ENCODE measurements at regions of chr11 and their contacts with region 1.

Region 1: GRCh38 chr11:71977743-71978418 is 20.8 kb upstream of the IL18BP start:
- DNase-seq: peak; percentile 30
- ATAC-seq: peak; percentile 92
- H3K4me3 ChIP-seq: no peak overlapping the region
- H3K27ac ChIP-seq: peak overlapping the region; percentile 13
- H3K4me1 ChIP-seq: peaks cover 10% of the 10 kb centered on the region
- H3K27me3 ChIP-seq: no peaks in the 10 kb centered on the region
- CTCF ChIP-seq: peak; percentile 45 to 77 (median 59); a peak in 5 of 6 replicates
- EP300 ChIP-seq: no peak
- POLR2A ChIP-seq: no peak
- RAD21 ChIP-seq: peak; percentile 85

Region 2: DNA sequence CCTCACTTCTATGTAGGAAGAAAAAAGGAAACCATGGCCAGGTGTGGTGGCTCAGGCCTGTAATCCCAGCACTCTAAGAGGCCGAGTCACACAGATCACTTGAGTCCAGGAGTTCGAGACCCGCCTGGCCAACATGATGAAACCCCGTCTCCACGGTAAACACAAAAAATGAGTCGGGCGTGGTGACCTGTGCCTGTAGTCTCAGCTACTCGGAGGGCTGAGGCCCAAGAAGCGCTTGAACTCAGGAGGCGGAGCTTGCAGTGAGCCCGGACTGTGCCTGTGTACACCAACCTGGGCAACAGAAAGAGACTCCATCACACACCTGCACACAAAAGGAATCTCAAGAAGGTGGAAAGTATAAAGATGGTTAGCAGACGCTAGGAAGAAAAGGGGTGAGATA is 81.9 kb before region 1 on chr11:
- CTCF ChIA-PET with region 1: no interaction called
- POLR2A ChIA-PET with region 1: no interaction called
- RAD21 ChIA-PET with region 1: no interaction called
- SMC1A ChIA-PET with region 1: no interaction called
- in situ Hi-C with region 1: no loop called
- intact Hi-C with region 1: no loop called
- DNase-seq: no peak
- ATAC-seq: no peak
- H3K4me3 ChIP-seq: no peak overlapping the region
- H3K27ac ChIP-seq: no peak overlapping the region
- H3K4me1 ChIP-seq: no peaks in the 10 kb centered on the region
- H3K27me3 ChIP-seq: no peaks in the 10 kb centered on the region
- CTCF ChIP-seq: no peak
- EP300 ChIP-seq: no peak
- POLR2A ChIP-seq: no peak
- RAD21 ChIP-seq: no peak

Region 3: GRCh38 chr11:71934213-71934612 is 43.7 kb before region 1 on chr11:
- CTCF ChIA-PET with region 1: interaction called, 49 read pairs
- POLR2A ChIA-PET with region 1: interaction called, 4 read pairs
- RAD21 ChIA-PET with region 1: interaction called, 24 read pairs
- SMC1A ChIA-PET with region 1: interaction called, 63 read pairs
- in situ Hi-C with region 1: no loop called
- intact Hi-C with region 1: no loop called
- DNase-seq: no peak
- ATAC-seq: peak; percentile 69
- H3K4me3 ChIP-seq: peak overlapping the region; percentile 86
- H3K27ac ChIP-seq: peak overlapping the region; percentile 98
- H3K4me1 ChIP-seq: peaks cover 21% of the 10 kb centered on the region
- H3K27me3 ChIP-seq: no peaks in the 10 kb centered on the region
- CTCF ChIP-seq: no peak
- EP300 ChIP-seq: no peak
- POLR2A ChIP-seq: no peak
- RAD21 ChIP-seq: no peak

Region 4: GRCh38 chr11:71962428-71963038 is 15.3 kb before region 1 on chr11:
- CTCF ChIA-PET with region 1: interaction called, 70 read pairs
- POLR2A ChIA-PET with region 1: no interaction called
- RAD21 ChIA-PET with region 1: interaction called, 5 read pairs
- SMC1A ChIA-PET with region 1: interaction called, 11 read pairs
- in situ Hi-C with region 1: no loop called
- intact Hi-C with region 1: no loop called
- DNase-seq: peak; percentile 53
- ATAC-seq: peak; percentile 96
- H3K4me3 ChIP-seq: peak overlapping the region; percentile 46; the same call in 1 of the 2 replicates
- H3K27ac ChIP-seq: peak overlapping the region; percentile 65
- H3K4me1 ChIP-seq: peaks cover 11% of the 10 kb centered on the region
- H3K27me3 ChIP-seq: no peaks in the 10 kb centered on the region
- CTCF ChIP-seq: no peak
- EP300 ChIP-seq: peak in 1 of 2 experiments; percentile 83; a peak in 1 of 4 replicates
- POLR2A ChIP-seq: no peak
- RAD21 ChIP-seq: no peak

Region 5: GRCh38 chr11:72009186-72009585 is 31.3 kb after region 1 on chr11:
- CTCF ChIA-PET with region 1: interaction called, 138 read pairs
- POLR2A ChIA-PET with region 1: interaction called, 4 read pairs
- RAD21 ChIA-PET with region 1: interaction called, 51 read pairs
- SMC1A ChIA-PET with region 1: interaction called, 64 read pairs
- in situ Hi-C with region 1: no loop called
- intact Hi-C with region 1: no loop called
- DNase-seq: no peak
- ATAC-seq: no peak
- H3K4me3 ChIP-seq: no peak overlapping the region
- H3K27ac ChIP-seq: no peak overlapping the region
- H3K4me1 ChIP-seq: no peaks in the 10 kb centered on the region
- H3K27me3 ChIP-seq: no peaks in the 10 kb centered on the region
- CTCF ChIP-seq: no peak
- EP300 ChIP-seq: no peak
- POLR2A ChIP-seq: no peak
- RAD21 ChIP-seq: no peak

Region 6: DNA sequence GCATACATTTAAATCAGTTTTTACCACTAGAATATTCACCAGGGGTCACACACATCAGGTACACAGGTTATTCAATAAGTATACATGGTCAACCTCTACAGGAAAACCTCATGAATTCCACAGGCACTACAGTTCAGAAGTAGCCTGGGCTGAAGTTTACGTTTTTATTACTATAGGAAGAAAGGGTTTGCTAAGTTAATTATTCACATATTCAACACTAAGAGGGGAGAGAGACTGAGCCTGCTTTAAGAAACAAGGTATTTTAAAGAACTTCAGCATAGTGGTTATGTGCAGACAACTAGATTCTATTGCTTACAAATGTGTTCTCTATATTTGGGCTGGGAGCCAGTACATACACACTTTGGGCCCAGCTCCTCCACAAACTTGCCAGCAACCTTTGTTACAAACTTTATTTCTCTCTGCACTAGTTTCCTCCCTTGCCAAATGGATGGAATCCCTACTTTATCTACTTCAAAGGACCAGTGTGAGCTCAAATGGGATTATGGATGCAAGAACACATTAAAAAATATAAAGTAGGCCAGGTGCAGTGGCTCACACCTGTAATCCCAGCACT is 52.7 kb after region 1 on chr11:
- CTCF ChIA-PET with region 1: interaction called, 83 read pairs
- POLR2A ChIA-PET with region 1: no interaction called
- RAD21 ChIA-PET with region 1: interaction called, 22 read pairs
- SMC1A ChIA-PET with region 1: interaction called, 33 read pairs
- in situ Hi-C with region 1: no loop called
- intact Hi-C with region 1: no loop called
- DNase-seq: no peak
- ATAC-seq: no peak
- H3K4me3 ChIP-seq: no peak overlapping the region
- H3K27ac ChIP-seq: no peak overlapping the region
- H3K4me1 ChIP-seq: no peaks in the 10 kb centered on the region
- H3K27me3 ChIP-seq: no peaks in the 10 kb centered on the region
- CTCF ChIP-seq: no peak
- EP300 ChIP-seq: no peak
- POLR2A ChIP-seq: no peak
- RAD21 ChIP-seq: no peak

Region 7: DNA sequence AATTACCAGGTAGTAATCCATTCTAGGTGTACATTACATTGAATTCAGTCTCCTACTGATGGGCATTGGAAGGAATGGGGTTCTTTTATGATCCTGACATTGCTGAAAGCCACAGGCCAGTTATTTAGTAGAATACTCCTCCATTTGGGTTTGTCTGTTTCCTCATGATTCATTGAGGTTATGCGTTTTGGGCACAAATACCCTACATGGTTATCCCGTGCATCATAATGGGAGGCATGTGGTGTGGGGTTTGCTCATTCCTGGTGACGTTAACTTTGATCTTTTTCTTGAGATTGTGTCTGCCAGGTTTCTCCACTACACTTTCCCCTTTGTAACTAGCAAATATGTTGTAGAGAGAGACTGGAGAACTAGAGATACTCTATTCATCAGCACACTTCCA is 163.2 kb after region 1 on chr11:
- CTCF ChIA-PET with region 1: interaction called, 52 read pairs
- POLR2A ChIA-PET with region 1: interaction called, 11 read pairs
- RAD21 ChIA-PET with region 1: interaction called, 18 read pairs
- SMC1A ChIA-PET with region 1: interaction called, 16 read pairs
- in situ Hi-C with region 1: no loop called
- intact Hi-C with region 1: loop called (anchors 2 kb)
- DNase-seq: no peak
- ATAC-seq: no peak
- H3K4me3 ChIP-seq: no peak overlapping the region
- H3K27ac ChIP-seq: no peak overlapping the region
- H3K4me1 ChIP-seq: no peaks in the 10 kb centered on the region
- H3K27me3 ChIP-seq: no peaks in the 10 kb centered on the region; a peak in 1 of 4 replicates
- CTCF ChIP-seq: no peak
- EP300 ChIP-seq: no peak
- POLR2A ChIP-seq: no peak
- RAD21 ChIP-seq: no peak